ENCODE measurements at regions of chr5 and their contacts with region 1.

Region 1: GRCh38 chr5:87400305-87400899 is 12.3 kb downstream of the CCNH start:
- DNase-seq: no peak
- ATAC-seq: peak; percentile 79
- H3K4me3 ChIP-seq: no peak overlapping the region
- H3K27ac ChIP-seq: no peak overlapping the region
- H3K4me1 ChIP-seq: no peaks in the 10 kb centered on the region
- H3K27me3 ChIP-seq: no peaks in the 10 kb centered on the region

Region 2: DNA sequence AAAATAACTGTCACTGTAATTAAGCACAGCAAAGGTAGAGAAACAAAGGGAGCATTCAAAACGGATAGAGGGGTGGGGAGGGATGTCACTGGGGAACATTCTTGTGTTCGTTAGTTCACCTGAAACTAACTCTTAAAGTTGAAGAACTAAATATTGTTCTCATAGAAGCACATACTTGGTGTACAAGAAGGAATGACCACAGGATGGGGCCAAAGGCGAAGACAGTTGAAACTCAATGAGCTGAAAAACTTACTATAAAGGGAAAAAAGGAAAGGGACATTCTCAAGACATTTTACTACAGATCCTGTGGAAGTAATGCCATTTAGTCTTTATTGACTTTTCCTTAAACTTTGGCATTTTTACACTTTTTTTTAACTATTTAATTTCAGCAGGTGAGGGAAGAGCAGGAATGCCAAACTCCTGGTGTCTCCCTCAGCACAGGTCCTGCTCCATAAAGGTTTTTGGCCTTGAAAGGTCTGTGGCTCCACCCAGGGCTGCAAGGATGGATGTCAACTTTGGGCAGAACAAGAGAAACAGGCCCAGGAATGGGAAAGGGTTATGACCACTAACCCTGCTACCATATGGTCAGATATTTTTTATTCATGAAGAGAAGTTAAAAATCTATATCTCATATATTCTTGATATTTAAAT is 330.3 kb before region 1 on chr5:
- intact Hi-C with region 1: loop called (anchors 2 kb)
- DNase-seq: peak in 1 of 2 donors; percentile 55
- ATAC-seq: no peak
- H3K4me3 ChIP-seq: no peak overlapping the region
- H3K27ac ChIP-seq: no peak overlapping the region
- H3K4me1 ChIP-seq: no peaks in the 10 kb centered on the region
- H3K27me3 ChIP-seq: no peaks in the 10 kb centered on the region

Measured in aorta (tissue), 5 donors.